ENCODE measurements at regions of chr15 and their contacts with region 1.

Region 1: GRCh38 chr15:85689729-85690128 is 105.0 kb downstream of the KLHL25 start:
- DNase-seq: peak; percentile 72 to 86
- ATAC-seq: peak; percentile 51 to 75 (median 68)
- H3K4me3 ChIP-seq: peak overlapping the region; percentile 70
- H3K4me3 Mint-ChIP-seq: peak overlapping the region; percentile 99
- H3K27ac ChIP-seq: peak overlapping the region; percentile 94
- H3K27ac Mint-ChIP-seq: peak overlapping the region; percentile 99 to 100
- H3K4me1 ChIP-seq: peaks cover 32% of the 10 kb centered on the region
- H3K4me1 Mint-ChIP-seq: peaks cover 62 to 65% of the 10 kb centered on the region in 2 donors
- H3K27me3 ChIP-seq: no peaks in the 10 kb centered on the region
- H3K27me3 Mint-ChIP-seq: no peaks in the 10 kb centered on the region
- CTCF ChIP-seq: no peak

Region 2: GRCh38 chr15:85625856-85626255 is 63.9 kb before region 1 on chr15:
- intact Hi-C with region 1: loop called (anchors 2 kb)
- DNase-seq: peak in 1 of 2 donors; percentile 73
- ATAC-seq: peak; percentile 81 to 95 (median 89)
- H3K4me3 ChIP-seq: no peak overlapping the region
- H3K4me3 Mint-ChIP-seq: peak overlapping the region; percentile 71
- H3K27ac ChIP-seq: peak overlapping the region; percentile 83
- H3K27ac Mint-ChIP-seq: peak overlapping the region; percentile 88 to 94
- H3K4me1 ChIP-seq: peaks cover 16% of the 10 kb centered on the region
- H3K4me1 Mint-ChIP-seq: peaks cover 74 to 78% of the 10 kb centered on the region in 2 donors
- H3K27me3 ChIP-seq: no peaks in the 10 kb centered on the region
- H3K27me3 Mint-ChIP-seq: no peaks in the 10 kb centered on the region
- CTCF ChIP-seq: no peak

Region 3: DNA sequence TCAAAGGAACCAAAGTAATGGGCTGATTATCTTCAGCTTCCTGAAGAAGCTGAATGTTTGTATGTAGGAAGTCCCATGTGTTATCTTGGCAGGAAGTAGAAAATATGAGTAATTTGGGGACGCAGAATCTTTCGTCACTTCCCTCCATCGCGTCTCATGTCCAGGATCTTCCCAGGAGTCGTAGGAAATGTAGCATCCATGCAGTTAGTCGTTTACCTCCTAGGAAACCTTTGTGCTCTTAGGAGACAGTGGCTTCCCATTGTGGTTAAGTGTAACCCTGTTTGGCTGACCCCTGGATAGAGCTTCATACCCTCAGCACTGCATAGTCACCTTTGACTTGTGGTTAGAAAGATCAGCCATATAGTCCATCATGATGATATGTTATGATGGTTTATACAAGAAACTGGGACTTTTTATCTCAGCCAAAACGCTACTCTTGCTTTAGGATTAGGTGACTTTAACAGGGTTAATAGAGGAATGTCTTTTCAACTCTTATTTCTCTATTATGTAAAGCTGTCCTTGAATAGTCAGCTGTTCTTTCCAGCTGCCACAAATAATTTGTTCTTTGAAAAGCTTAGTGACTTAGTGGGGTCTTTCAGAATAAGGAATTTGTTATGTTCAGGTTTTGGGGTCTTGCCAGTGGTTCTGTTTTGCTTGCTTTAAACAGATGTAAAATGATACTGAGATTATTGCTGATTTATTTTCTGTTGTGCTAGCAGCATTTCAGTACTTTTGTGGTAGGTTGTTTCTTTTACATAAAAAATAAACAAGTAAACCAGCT is 12.8 kb after region 1 on chr15:
- intact Hi-C with region 1: loop called (anchors 1 kb)
- DNase-seq: peak; percentile 54 to 81
- ATAC-seq: peak; percentile 56 to 68 (median 59)
- H3K4me3 ChIP-seq: peak overlapping the region; percentile 11
- H3K4me3 Mint-ChIP-seq: peak overlapping the region; percentile 89
- H3K27ac ChIP-seq: peak overlapping the region; percentile 98
- H3K27ac Mint-ChIP-seq: peak overlapping the region; percentile 100
- H3K4me1 ChIP-seq: peaks cover 56% of the 10 kb centered on the region
- H3K4me1 Mint-ChIP-seq: peaks cover 72 to 78% of the 10 kb centered on the region in 2 donors
- H3K27me3 ChIP-seq: no peaks in the 10 kb centered on the region
- H3K27me3 Mint-ChIP-seq: no peaks in the 10 kb centered on the region
- CTCF ChIP-seq: no peak